ENCODE measurements at regions of chr16 and their contacts with region 1.

Region 1: GRCh38 chr16:79589601-79590102 is 10.9 kb downstream of the MAF start:
- DNase-seq: peak; percentile 49
- ATAC-seq: peak; percentile 45

Region 2: DNA sequence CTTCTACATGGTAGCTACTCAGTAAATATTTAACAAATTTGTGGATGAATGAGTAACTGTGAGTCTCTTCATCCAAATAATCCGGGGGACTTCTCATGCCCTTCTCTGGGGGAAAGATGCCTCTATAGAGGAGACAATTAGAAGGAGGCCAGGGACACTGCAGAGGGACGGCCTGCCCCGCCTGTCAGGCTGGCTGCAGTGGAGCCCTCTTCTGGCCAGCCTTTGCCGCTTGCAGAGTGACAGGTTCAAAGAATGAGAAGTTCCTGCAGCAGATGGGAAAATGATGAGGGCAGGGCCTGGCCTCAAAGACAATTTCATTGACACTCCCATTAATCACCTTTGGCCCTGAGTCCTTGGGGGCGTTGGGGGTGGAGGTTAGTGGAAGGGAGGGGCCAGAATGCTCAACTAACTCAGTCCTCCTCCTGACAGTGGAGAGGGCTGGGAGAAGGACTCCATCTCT is 328.1 kb before region 1 on chr16:
- intact Hi-C with region 1: loop called (anchors 10 kb)
- DNase-seq: peak; percentile 69
- ATAC-seq: peak; percentile 62

Region 3: GRCh38 chr16:79554912-79555311 is 34.7 kb before region 1 on chr16:
- intact Hi-C with region 1: no loop called
- DNase-seq: no peak
- ATAC-seq: no peak

Measured in Right ventricle myocardium superior (tissue), 1 donor.